Mammary epithelial cell (primary cell): ENCODE measurements at regions of chr17 and their contacts with region 1.

Region 1: GRCh38 chr17:48215583-48216139 is 108.1 kb downstream of the SNX11 start:
- DNase-seq: peak; percentile 31
- H3K4me3 ChIP-seq: no peak overlapping the region
- H3K27ac ChIP-seq: no peak overlapping the region
- H3K4me1 ChIP-seq: no peaks in the 10 kb centered on the region
- H3K27me3 ChIP-seq: no peaks in the 10 kb centered on the region
- CTCF ChIP-seq: peak; percentile 66 to 81

Region 2: GRCh38 chr17:48107168-48108132 is 108.2 kb before region 1 on chr17 and contains the start of gene SNX11:
- CTCF ChIA-PET with region 1: no interaction called
- dilution Hi-C with region 1: no loop called
- in situ Hi-C with region 1: no loop called
- intact Hi-C with region 1: no loop called
- DNase-seq: peak; percentile 92
- H3K4me3 ChIP-seq: peak within 1 kb of the TSS; percentile 65 to 91 (median 71)
- H3K27ac ChIP-seq: peak within 1 kb of the TSS; percentile 81
- H3K4me1 ChIP-seq: peaks cover 7% of the 10 kb centered on the region
- H3K27me3 ChIP-seq: no peaks in the 10 kb centered on the region
- CTCF ChIP-seq: peak in 1 of 2 donors; percentile 28
- total RNA-seq, gene SNX11: 20.2 to 25.8 TPM

Region 3: GRCh38 chr17:48175692-48176470 is 39.8 kb before region 1 on chr17:
- CTCF ChIA-PET with region 1: no interaction called
- dilution Hi-C with region 1: no loop called
- in situ Hi-C with region 1: no loop called
- intact Hi-C with region 1: no loop called
- DNase-seq: peak; percentile 54
- H3K4me3 ChIP-seq: no peak overlapping the region
- H3K27ac ChIP-seq: no peak overlapping the region
- H3K4me1 ChIP-seq: peaks cover 10% of the 10 kb centered on the region
- H3K27me3 ChIP-seq: no peaks in the 10 kb centered on the region
- CTCF ChIP-seq: no peak

Region 4: GRCh38 chr17:48259694-48260291 is 44.1 kb after region 1 on chr17:
- CTCF ChIA-PET with region 1: interaction called, 4 read pairs
- dilution Hi-C with region 1: no loop called
- in situ Hi-C with region 1: no loop called
- intact Hi-C with region 1: loop called (anchors 1 kb)
- DNase-seq: peak; percentile 30
- H3K4me3 ChIP-seq: no peak overlapping the region
- H3K27ac ChIP-seq: no peak overlapping the region
- H3K4me1 ChIP-seq: no peaks in the 10 kb centered on the region
- H3K27me3 ChIP-seq: no peaks in the 10 kb centered on the region
- CTCF ChIP-seq: peak; percentile 65 to 77

Region 5: GRCh38 chr17:48307814-48308411 is 92.3 kb after region 1 on chr17:
- CTCF ChIA-PET with region 1: interaction called, 4 read pairs
- dilution Hi-C with region 1: no loop called
- in situ Hi-C with region 1: no loop called
- intact Hi-C with region 1: loop called (anchors 1 kb)
- DNase-seq: peak; percentile 37
- H3K4me3 ChIP-seq: no peak overlapping the region
- H3K27ac ChIP-seq: no peak overlapping the region
- H3K4me1 ChIP-seq: no peaks in the 10 kb centered on the region
- H3K27me3 ChIP-seq: peaks cover 20% of the 10 kb centered on the region
- CTCF ChIP-seq: peak; percentile 91 to 96

Region 6: GRCh38 chr17:48335858-48336500 is 120.3 kb after region 1 on chr17:
- CTCF ChIA-PET with region 1: no interaction called
- dilution Hi-C with region 1: no loop called
- in situ Hi-C with region 1: loop called in 1 of 2 experiments (anchors 5 kb)
- intact Hi-C with region 1: loop called (anchors 5 kb)
- DNase-seq: peak; percentile 53
- H3K4me3 ChIP-seq: no peak overlapping the region
- H3K27ac ChIP-seq: no peak overlapping the region
- H3K4me1 ChIP-seq: peaks cover 3% of the 10 kb centered on the region
- H3K27me3 ChIP-seq: peaks cover 13% of the 10 kb centered on the region
- CTCF ChIP-seq: peak; percentile 69 to 71

Region 7: DNA sequence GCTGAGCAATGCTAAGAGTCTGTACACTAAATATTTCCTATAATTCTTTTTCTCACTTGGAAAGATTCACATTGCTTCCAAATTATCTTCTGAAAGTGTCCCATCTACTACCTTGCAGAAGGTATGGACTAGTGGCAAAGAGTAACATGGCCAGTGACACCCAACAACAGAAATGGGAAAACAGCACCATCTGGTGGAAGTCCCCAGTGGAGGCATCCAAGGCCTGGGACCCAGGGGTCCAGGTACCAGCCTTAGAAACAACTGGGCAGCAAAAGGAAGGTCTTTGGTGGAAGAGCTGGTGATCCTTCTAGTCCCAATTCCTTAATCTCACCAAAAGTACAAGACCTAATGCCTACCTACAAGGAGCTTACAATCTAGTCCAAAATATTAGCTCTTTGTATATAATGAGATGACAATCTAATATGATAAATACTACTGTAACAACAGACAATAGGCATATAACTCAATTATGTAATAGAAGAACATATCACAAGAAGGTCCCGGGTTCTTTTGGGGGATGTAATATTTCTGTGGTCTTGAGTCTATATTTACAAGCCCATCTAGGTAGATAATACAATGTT is 159.1 kb after region 1 on chr17:
- CTCF ChIA-PET with region 1: no interaction called
- dilution Hi-C with region 1: no loop called
- in situ Hi-C with region 1: no loop called
- intact Hi-C with region 1: loop called (anchors 2 kb)
- DNase-seq: peak; percentile 1
- H3K4me3 ChIP-seq: no peak overlapping the region
- H3K27ac ChIP-seq: no peak overlapping the region
- H3K4me1 ChIP-seq: no peaks in the 10 kb centered on the region
- H3K27me3 ChIP-seq: peaks cover 5% of the 10 kb centered on the region
- CTCF ChIP-seq: peak; percentile 43 to 58

Region 8: DNA sequence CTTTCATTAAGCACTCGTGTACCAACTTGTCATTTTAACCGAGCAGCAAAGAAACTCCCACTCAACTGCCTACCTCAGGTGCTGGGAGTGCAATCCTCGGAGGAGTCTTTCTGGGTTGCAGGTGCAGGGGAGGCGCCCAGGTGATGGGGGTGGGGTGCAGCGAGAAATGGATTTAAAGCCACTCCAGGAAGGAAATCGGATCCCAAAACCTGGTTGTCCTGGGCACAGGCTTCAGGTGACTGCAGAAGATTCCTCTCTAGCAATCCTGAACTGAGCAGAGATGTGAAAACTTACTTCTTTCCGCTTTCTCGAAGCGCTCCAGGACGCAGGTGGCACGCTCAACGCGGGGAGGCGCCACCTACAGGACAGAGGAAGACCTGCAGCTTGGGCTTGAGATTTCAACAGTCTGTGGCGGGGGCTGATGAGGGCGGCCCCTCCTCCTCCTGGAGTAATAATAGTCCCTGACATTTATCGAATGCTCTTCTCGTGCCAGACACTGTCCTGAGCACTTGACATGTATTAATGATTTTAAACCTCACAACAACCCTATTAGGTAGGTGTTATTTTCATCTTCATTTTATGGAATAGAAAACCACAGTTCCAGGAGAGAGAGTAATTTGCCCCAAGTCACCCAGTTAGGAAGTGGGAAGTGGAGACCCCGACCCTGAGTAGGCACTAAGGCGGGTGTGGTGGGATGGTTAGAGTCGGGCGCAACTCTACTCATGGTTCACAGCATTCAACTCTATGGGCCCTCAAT is 241.6 kb after region 1 on chr17:
- CTCF ChIA-PET with region 1: no interaction called
- dilution Hi-C with region 1: no loop called
- in situ Hi-C with region 1: no loop called
- intact Hi-C with region 1: loop called (anchors 1 kb)
- DNase-seq: peak; percentile 42
- H3K4me3 ChIP-seq: peak overlapping the region in 2 of 3 experiments; percentile 19 to 28
- H3K27ac ChIP-seq: no peak overlapping the region
- H3K4me1 ChIP-seq: peaks cover 12% of the 10 kb centered on the region
- H3K27me3 ChIP-seq: no peaks in the 10 kb centered on the region
- CTCF ChIP-seq: peak; percentile 94

Region 9: DNA sequence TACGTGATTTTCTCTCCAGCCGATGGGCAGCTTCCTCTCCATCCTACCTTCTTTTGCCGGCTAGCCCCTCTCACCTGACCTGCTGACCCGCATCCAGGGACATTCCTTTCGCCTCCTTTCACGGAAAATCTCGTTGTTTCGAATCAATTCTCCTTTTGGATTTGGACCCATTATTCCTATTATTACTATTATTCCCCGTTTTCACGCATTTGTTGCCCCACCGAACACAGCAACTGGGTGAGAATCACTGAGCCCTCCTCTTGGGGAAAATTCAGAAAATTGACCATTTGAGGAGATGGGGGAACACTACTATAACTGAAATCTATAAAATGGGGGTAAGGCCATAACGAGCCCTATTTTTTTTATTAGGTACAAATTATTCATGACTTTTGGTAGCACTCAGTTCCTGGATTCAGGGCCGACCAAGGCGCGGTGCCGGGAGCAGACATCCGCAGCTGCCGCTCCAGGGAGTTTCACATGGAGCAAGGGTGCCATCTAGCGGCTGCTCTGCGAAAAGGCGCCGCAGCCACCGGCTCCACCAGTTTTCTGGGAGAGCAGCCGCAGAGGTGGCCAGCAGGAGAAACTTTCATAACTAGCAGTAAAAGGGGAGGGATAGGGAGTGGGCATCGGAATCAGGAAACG is 402.7 kb after region 1 on chr17:
- CTCF ChIA-PET with region 1: no interaction called
- dilution Hi-C with region 1: no loop called
- in situ Hi-C with region 1: no loop called
- intact Hi-C with region 1: loop called (anchors 1 kb)
- DNase-seq: peak; percentile 77
- H3K4me3 ChIP-seq: no peak overlapping the region
- H3K27ac ChIP-seq: no peak overlapping the region
- H3K4me1 ChIP-seq: peaks cover 4% of the 10 kb centered on the region
- H3K27me3 ChIP-seq: peaks cover 87% of the 10 kb centered on the region
- CTCF ChIP-seq: peak; percentile 87 to 92